CD14-positive monocyte (primary cell): ENCODE measurements at regions of chr22 and their contacts with region 1.

Region 1: DNA sequence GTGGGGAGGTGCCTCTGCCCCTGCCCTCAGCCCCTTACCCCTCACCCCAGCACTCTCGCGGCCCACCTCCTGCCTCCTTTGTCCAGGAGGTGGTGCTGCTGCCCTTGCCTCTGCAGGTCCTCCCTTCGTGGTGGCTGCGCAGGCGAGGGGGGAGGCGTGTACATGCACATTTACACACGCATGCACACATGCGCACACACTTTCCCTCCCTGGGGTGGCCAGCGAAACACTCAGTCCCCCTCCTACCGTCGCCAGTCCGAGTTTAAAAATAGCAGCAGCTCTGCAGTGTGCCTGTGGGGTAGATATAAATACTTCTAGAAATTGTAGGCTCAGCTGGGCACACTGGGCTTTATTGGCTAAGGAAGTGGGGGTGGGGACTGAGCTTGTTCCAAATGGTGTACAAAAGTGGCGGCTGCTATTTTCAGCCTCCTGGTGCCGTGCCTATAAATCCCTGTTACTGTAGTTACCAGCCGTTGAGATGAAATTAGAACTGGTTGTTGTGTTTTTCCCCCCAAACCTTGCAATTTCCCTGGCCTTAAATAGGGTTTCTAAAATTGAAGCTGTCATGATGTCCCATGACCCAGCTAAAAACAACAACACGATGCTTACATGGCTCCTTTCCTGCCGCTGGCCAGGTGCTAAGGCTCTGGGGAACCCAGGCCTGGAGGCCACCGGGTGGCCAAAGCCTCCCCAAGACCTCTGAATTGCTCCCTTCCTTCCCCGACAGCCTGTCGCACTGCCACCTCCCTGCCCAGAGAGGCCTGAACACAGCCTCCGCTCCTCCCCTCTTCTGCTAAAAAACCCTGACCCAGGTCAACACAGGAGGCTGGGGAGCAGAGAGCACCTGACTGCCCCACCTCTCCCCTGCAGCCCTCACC is 12.4 kb downstream of the PICK1 start:
- DNase-seq: no peak
- H3K4me3 ChIP-seq: no peak overlapping the region
- H3K4me3 Mint-ChIP-seq: no peak overlapping the region
- H3K27ac ChIP-seq: no peak overlapping the region
- H3K27ac Mint-ChIP-seq: no peak overlapping the region
- H3K4me1 ChIP-seq: no peaks in the 10 kb centered on the region
- H3K4me1 Mint-ChIP-seq: no peaks in the 10 kb centered on the region
- H3K27me3 ChIP-seq: no peaks in the 10 kb centered on the region
- H3K27me3 Mint-ChIP-seq: peaks cover 0 to 3% (median 0%) of the 10 kb centered on the region in 3 donors
- CTCF ChIP-seq: no peak

Region 2: DNA sequence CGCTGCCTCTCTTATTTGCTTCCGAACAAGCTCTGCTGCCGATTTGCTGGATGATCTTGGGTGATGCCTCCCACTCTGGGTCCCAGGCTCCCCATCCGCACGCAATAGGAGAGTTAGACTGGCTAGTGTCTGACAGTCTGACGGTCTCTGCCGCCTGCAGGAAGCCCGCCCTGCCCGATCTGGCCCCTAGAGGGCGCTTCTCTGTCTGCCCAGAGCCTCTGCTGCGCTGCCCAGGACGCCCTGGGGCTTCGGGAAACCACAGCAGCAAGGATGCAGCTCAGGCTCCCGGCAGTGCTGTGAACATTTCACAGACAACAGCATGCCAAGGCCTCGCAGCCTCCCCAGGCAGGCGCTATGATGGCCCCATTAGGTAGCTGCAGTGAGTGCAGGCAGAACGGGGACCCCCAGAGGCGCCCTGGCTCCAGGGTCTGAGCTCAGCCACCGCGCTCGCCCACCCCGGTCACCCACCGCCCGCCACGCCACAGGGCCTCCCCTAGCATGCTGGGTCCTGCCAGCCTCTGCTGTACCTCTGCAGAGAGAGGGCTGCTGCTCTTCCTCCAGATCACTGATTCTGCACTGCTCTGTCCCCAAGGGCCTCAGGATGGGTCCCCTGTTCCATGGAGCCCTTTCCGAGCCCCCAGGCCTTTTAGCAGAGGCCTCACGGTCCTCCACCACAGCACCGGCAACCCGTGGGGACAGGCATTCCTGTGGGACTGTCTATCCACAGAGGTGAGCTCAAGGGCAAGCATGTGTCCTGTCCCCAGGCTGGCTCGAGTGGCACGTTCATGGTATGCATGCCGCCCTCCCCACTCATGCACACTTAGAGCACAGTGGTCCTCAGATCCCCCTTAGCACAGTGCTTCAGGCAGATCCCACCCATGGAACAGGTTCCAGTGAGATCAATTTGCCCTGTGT is 45.1 kb after region 1 on chr22:
- intact Hi-C with region 1: loop called in 1 of 2 experiments (anchors 5 kb)
- DNase-seq: peak; percentile 67 to 77 (median 73)
- H3K4me3 ChIP-seq: no peak overlapping the region
- H3K4me3 Mint-ChIP-seq: no peak overlapping the region
- H3K27ac ChIP-seq: no peak overlapping the region
- H3K27ac Mint-ChIP-seq: no peak overlapping the region
- H3K4me1 ChIP-seq: no peaks in the 10 kb centered on the region
- H3K4me1 Mint-ChIP-seq: no peaks in the 10 kb centered on the region
- H3K27me3 ChIP-seq: no peaks in the 10 kb centered on the region
- H3K27me3 Mint-ChIP-seq: peaks cover 1% of the 10 kb centered on the region in 3 donors
- CTCF ChIP-seq: peak; percentile 87